PC-9 (cell line): ENCODE measurements at regions of chr17 and their contacts with region 1.

Region 1: DNA sequence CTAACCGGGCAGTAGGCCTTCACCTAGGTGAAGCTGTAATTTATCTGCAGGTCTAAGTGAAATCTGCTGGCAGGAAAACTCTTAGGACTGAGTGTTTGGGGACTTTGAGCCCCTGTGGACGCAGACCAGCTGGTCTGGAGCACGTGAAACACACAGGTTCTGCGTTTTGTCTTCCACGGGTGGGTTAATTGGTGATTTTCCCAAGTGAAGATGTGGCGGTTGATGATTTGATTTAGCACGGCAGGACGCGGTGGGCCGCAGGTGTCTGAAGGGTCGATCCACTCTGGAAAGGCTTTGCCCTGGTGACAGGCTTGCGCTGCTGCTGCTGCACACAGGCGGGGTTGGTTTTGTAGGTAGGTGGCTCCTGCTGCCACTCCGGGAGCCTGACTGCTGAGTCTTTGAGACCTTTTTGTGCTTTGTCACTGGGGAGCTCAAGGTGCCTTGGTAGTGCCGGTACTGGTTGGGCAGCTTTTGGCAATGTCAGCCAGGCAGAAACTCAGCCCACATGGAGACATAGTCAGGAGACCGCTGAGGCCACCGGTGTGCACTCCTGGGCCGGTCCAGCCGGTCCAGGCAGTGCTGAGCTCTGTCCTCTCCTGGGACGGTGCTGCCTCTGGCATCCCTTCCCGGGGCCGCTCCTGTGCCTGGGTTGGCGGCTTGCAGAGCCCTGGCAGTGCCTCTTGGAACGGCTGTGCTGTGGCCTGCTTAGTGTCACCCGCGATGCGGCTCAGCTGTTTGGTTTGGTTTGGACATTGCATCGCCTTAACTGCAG is 2.3 kb downstream of the BAIAP2 start:
- DNase-seq: peak; percentile 95 to 96
- H3K4me3 ChIP-seq: peak overlapping the region; percentile 66
- H3K27ac ChIP-seq: peak overlapping the region; percentile 93
- H3K4me1 ChIP-seq: peaks cover 51% of the 10 kb centered on the region
- H3K27me3 ChIP-seq: no peaks in the 10 kb centered on the region
- CTCF ChIP-seq: no peak

Region 2: GRCh38 chr17:80045703-80046102 is 991.5 kb before region 1 on chr17:
- CTCF ChIA-PET with region 1: no interaction called
- POLR2A ChIA-PET with region 1: no interaction called
- intact Hi-C with region 1: no loop called
- DNase-seq: no peak
- H3K4me3 ChIP-seq: no peak overlapping the region
- H3K27ac ChIP-seq: no peak overlapping the region
- H3K4me1 ChIP-seq: no peaks in the 10 kb centered on the region
- H3K27me3 ChIP-seq: no peaks in the 10 kb centered on the region
- CTCF ChIP-seq: no peak

Region 3: GRCh38 chr17:80913928-80914821 is 123.0 kb before region 1 on chr17:
- CTCF ChIA-PET with region 1: no interaction called
- POLR2A ChIA-PET with region 1: no interaction called
- intact Hi-C with region 1: no loop called
- DNase-seq: no peak
- H3K4me3 ChIP-seq: no peak overlapping the region
- H3K27ac ChIP-seq: no peak overlapping the region
- H3K4me1 ChIP-seq: no peaks in the 10 kb centered on the region
- H3K27me3 ChIP-seq: no peaks in the 10 kb centered on the region
- CTCF ChIP-seq: no peak

Region 4: GRCh38 chr17:80970044-80970761 is 67.0 kb before region 1 on chr17:
- CTCF ChIA-PET with region 1: no interaction called
- POLR2A ChIA-PET with region 1: no interaction called
- intact Hi-C with region 1: no loop called
- DNase-seq: peak in 1 of 2 experiments; percentile 37
- H3K4me3 ChIP-seq: no peak overlapping the region
- H3K27ac ChIP-seq: no peak overlapping the region
- H3K4me1 ChIP-seq: no peaks in the 10 kb centered on the region
- H3K27me3 ChIP-seq: no peaks in the 10 kb centered on the region
- CTCF ChIP-seq: peak; percentile 41; the same call in 1 of the 2 replicates

Region 5: DNA sequence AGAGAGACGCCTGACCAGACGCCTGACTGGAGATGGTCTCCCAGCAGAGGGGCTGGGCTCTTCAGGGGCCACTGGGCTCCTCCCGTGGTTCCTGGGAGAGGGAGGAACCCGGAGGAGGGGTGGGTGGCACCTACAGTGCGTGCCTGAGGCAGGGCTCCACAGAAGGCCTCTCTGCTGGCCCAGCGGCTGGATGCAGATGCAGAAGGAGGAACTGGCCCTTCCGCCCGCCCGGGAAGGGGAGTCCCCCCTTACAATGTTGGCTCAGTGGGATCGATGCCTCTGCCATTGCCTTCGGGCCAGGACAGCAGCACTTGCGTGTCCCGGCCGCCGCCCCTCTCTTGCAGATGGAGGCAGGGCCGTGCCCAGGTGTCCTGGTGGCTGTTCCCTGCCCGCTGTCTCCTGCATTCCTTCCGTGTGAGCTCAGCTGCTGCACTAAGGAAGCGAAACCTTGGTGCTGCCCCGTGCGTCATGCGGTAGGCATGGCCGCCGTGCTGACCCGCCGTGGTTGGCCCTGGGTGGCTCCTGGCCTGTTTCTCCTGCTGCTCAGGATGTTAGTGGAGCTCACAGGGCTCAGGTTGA is 12.8 kb after region 1 on chr17:
- CTCF ChIA-PET with region 1: interaction called, 3 read pairs
- POLR2A ChIA-PET with region 1: interaction called, 26 read pairs
- intact Hi-C with region 1: loop called (anchors 1 kb)
- DNase-seq: peak; percentile 96 to 97
- H3K4me3 ChIP-seq: peak overlapping the region; percentile 41; the same call in 1 of the 2 replicates
- H3K27ac ChIP-seq: peak overlapping the region; percentile 87
- H3K4me1 ChIP-seq: peaks cover 56% of the 10 kb centered on the region
- H3K27me3 ChIP-seq: no peaks in the 10 kb centered on the region
- CTCF ChIP-seq: no peak

Region 6: DNA sequence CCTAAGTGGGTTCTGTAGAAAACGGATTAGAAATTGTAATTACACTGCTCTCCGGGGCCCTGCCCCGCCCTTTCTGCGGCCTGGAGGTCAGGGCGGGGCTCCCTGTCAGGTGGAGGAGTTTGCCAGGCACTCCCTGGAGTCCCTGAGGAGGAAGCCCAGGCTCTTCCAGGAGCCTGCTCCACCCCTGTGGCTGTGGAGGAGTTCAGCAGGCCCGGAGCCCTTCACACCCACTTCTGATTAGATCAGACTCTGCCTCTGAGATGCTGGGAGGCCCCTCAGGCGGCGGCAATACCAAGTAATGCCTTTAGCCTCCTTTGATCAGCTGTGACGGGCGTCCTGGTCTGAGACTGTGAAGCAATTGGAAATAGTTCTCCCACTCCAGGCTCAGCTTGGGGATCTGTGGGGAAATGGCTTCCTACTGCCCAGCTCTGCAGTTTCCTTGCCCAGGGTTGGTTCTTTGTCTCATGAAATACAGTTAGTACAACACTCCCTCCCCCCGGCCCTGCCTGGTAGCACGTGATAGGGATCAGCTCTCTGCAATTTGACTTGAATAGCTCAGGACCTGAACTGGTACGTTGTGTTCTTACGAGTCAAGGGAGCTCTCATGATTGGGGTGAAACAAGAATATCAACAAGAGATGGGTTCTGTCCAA is 20.0 kb after region 1 on chr17:
- CTCF ChIA-PET with region 1: no interaction called
- POLR2A ChIA-PET with region 1: interaction called, 3 read pairs
- intact Hi-C with region 1: loop called (anchors 1 kb)
- DNase-seq: peak; percentile 92 to 93
- H3K4me3 ChIP-seq: no peak overlapping the region
- H3K27ac ChIP-seq: peak overlapping the region; percentile 66
- H3K4me1 ChIP-seq: peaks cover 15% of the 10 kb centered on the region
- H3K27me3 ChIP-seq: no peaks in the 10 kb centered on the region
- CTCF ChIP-seq: no peak